Dorsolateral prefrontal cortex (tissue), 120 donors: ENCODE measurements at regions of chr18 and their contacts with region 1.

Region 1: GRCh38 chr18:21341141-21341540 is 99.1 kb downstream of the GREB1L start:
- DNase-seq: no peak
- H3K4me3 ChIP-seq: no peak overlapping the region
- H3K27ac ChIP-seq: no peak overlapping the region
- H3K27me3 ChIP-seq: peaks cover 0 to 3% (median 0%) of the 10 kb centered on the region in 45 donors
- CTCF ChIP-seq: no peak

Region 2: GRCh38 chr18:21369146-21369545 is 28.0 kb after region 1 on chr18:
- intact Hi-C with region 1: no loop called
- DNase-seq: no peak
- H3K4me3 ChIP-seq: no peak overlapping the region
- H3K27ac ChIP-seq: no peak overlapping the region
- H3K27me3 ChIP-seq: peaks cover 0 to 3% (median 0%) of the 10 kb centered on the region in 45 donors
- CTCF ChIP-seq: no peak

Region 3: DNA sequence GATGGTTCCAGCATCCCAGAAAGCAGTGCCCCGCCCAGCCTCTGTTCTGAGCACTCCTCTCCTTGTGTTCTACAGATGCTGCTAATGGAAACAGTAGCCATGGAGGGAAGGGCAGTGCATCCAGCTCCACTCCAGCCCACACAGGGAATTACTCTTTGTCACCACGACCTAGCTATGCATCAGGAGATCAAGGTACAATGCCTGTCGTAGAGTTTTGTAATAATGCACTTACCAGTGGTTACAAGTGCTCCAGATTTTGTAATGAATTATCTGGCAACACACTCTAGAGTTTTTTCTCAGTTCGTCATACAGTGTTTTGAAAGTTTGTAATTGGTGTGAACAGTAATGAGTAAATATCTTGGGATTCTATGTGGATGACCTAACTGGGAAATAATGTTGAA is 98.3 kb after region 1 on chr18:
- intact Hi-C with region 1: loop called in 1 of 2 experiments (anchors 10 kb)
- DNase-seq: no peak
- H3K4me3 ChIP-seq: no peak overlapping the region
- H3K27ac ChIP-seq: no peak overlapping the region
- H3K27me3 ChIP-seq: peaks cover 0 to 5% (median 0%) of the 10 kb centered on the region in 45 donors
- CTCF ChIP-seq: no peak

Region 4: DNA sequence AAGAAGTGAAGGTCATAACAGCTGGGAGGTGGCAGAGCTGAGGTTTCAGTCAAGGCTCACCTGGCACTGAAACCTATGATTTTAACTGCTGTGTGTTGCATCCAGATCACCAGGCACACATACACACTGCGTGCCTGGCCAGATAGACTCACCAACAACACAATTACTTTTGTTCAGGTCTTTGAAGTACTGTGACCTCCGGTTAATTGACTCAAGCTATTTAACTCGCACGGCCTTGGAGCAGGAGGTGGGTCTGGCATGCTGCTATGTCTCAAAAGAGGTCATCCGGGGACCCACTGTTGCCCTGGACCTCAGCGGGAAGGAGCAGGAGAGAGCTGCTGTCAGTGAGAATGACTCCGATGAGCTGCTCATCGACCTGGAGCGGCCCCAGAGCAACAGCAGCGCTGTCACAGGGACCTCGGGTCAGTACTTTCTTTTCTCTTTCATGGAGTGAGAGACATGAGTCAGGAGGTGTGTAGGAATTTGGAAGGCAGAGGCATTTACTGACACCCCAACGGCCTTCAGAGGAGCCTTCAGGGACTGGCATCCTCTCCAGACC is 155.2 kb after region 1 on chr18:
- intact Hi-C with region 1: no loop called
- DNase-seq: no peak
- H3K4me3 ChIP-seq: no peak overlapping the region
- H3K27ac ChIP-seq: no peak overlapping the region
- H3K27me3 ChIP-seq: no peaks in the 10 kb centered on the region
- CTCF ChIP-seq: no peak